Breast epithelium (tissue), 4 donors: ENCODE measurements at regions of chr2 and their contacts with region 1.

Region 1: GRCh38 chr2:118670838-118671237 is 176.6 kb downstream of the EN1 start:
- DNase-seq: no peak
- H3K4me3 ChIP-seq: no peak overlapping the region
- H3K27ac ChIP-seq: no peak overlapping the region
- H3K4me1 ChIP-seq: no peaks in the 10 kb centered on the region
- H3K27me3 ChIP-seq: no peaks in the 10 kb centered on the region
- CTCF ChIP-seq: no peak
- POLR2A ChIP-seq: no peak

Region 2: DNA sequence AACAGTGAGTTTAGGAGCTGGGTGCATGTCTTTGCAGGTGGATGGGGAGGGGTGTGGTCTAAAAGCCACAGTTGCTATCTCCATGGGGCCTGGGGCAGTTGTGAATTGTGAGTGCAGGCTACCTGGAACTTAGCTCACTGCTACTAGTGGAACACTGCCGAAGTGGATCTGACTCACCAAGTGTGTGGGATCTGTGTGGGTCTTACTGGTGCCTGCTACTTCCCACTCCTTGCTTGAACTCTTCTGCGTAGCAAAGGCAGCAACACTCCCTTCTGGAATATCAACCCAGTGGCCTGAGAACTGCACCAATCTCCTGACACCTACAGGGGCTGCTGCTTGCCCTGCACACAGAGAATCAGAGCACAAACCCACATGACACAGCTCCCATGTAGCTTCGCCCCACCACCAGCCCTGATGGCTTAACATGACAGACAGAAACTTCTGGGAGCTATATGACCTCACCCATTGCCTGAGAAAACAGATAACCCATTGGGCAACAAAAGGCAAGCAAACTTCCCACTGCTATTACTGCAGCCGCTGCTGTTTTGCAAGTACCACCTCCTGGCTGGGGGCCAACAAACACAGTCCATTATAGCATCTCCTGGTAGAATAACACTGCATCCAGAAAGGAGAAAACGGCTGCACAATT is 1311.4 kb before region 1 on chr2:
- intact Hi-C with region 1: loop called (anchors 10 kb)
- DNase-seq: no peak
- H3K4me3 ChIP-seq: no peak overlapping the region
- H3K27ac ChIP-seq: no peak overlapping the region
- H3K4me1 ChIP-seq: no peaks in the 10 kb centered on the region
- H3K27me3 ChIP-seq: no peaks in the 10 kb centered on the region
- CTCF ChIP-seq: no peak
- POLR2A ChIP-seq: no peak

Region 3: GRCh38 chr2:118686369-118686768 is 15.5 kb after region 1 on chr2:
- intact Hi-C with region 1: no loop called
- DNase-seq: no peak
- H3K4me3 ChIP-seq: no peak overlapping the region
- H3K27ac ChIP-seq: no peak overlapping the region
- H3K4me1 ChIP-seq: no peaks in the 10 kb centered on the region
- H3K27me3 ChIP-seq: no peaks in the 10 kb centered on the region
- CTCF ChIP-seq: no peak
- POLR2A ChIP-seq: no peak